ENCODE measurements at regions of chr19 and their contacts with region 1.

Region 1: DNA sequence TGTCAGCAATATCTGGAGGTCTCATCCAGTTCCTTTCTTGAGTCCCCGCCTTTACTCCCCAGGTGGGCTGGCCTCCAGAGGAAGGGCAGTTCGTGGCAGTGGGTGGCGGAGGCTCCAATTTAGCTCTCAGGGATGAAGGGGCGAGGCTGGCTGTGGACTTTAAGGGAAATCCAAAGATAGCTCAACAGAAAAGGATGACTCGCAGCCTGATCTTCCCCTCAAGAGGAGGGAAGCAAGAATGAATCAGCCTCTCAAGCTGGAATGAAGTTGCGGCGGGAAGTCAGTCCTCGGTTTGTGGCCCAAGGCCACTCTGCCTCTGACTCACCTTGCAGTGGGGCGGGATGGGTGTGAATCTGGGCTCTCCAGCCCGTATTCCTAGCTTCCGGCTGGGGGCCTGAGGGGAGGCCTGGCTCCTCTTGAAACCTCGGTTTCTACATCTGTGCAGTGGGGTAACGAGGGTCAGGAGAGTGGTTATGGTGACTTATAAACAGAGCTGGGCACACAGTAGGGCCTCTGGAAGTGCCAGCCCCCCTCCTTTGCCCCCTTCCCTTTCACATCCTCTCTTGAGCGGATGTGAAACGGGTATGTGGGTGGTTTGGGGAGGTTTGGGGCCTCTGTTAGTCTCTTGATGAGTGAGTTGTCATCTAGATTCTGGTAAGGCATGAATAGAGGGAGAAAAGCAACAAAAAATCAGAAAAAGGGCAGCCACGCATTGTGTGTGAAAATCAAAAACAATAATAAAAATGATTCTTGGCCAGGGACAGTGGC is 10.5 kb upstream of the SMG9 start:
- DNase-seq: peak; percentile 96
- ATAC-seq: peak; percentile 88
- H3K4me3 Mint-ChIP-seq: peak overlapping the region; percentile 49
- H3K27ac Mint-ChIP-seq: peak overlapping the region; percentile 94
- H3K4me1 Mint-ChIP-seq: peaks cover 55% of the 10 kb centered on the region
- H3K27me3 Mint-ChIP-seq: no peaks in the 10 kb centered on the region

Region 2: GRCh38 chr19:43668406-43669158 is 96.7 kb before region 1 on chr19:
- CTCF ChIA-PET with region 1: interaction called, 16 read pairs
- DNase-seq: peak; percentile 99
- ATAC-seq: peak; percentile 91
- H3K4me3 Mint-ChIP-seq: peak overlapping the region; percentile 82
- H3K27ac Mint-ChIP-seq: peak overlapping the region; percentile 85
- H3K4me1 Mint-ChIP-seq: peaks cover 38% of the 10 kb centered on the region
- H3K27me3 Mint-ChIP-seq: peaks cover 12% of the 10 kb centered on the region

Region 3: GRCh38 chr19:43726736-43727592 is 38.3 kb before region 1 on chr19:
- CTCF ChIA-PET with region 1: no interaction called
- DNase-seq: no peak
- ATAC-seq: no peak
- H3K4me3 Mint-ChIP-seq: no peak overlapping the region
- H3K27ac Mint-ChIP-seq: no peak overlapping the region
- H3K4me1 Mint-ChIP-seq: peaks cover 4% of the 10 kb centered on the region
- H3K27me3 Mint-ChIP-seq: no peaks in the 10 kb centered on the region

Region 4: GRCh38 chr19:43754503-43755255 is 10.6 kb before region 1 on chr19 and contains the start of gene SMG9:
- CTCF ChIA-PET with region 1: interaction called, 116 read pairs
- DNase-seq: peak; percentile 98
- ATAC-seq: peak; percentile 87
- H3K4me3 Mint-ChIP-seq: peak within 1 kb of the TSS; percentile 89
- H3K27ac Mint-ChIP-seq: peak within 1 kb of the TSS; percentile 98
- H3K4me1 Mint-ChIP-seq: peaks cover 65% of the 10 kb centered on the region
- H3K27me3 Mint-ChIP-seq: no peaks in the 10 kb centered on the region
- total RNA-seq, gene SMG9: 62.3 to 74.7 TPM

Region 5: GRCh38 chr19:43784981-43785808 is 19.9 kb after region 1 on chr19:
- CTCF ChIA-PET with region 1: interaction called, 145 read pairs
- DNase-seq: peak; percentile 76
- ATAC-seq: peak; percentile 46
- H3K4me3 Mint-ChIP-seq: peak overlapping the region; percentile 25
- H3K27ac Mint-ChIP-seq: peak overlapping the region; percentile 87
- H3K4me1 Mint-ChIP-seq: peaks cover 41% of the 10 kb centered on the region
- H3K27me3 Mint-ChIP-seq: peaks cover 7% of the 10 kb centered on the region

Measured in activated CD8-positive, alpha-beta memory T cell treated with anti-CD3 and anti-CD28 coated beads, Interleukin-2, amount 10 ng/mL, durations not matched to agents 7 days and 5 days (primary cell).